ENCODE measurements at regions of chr13 and their contacts with region 1.

Region 1: GRCh38 chr13:98570929-98571372 is 6.0 kb downstream of the STK24 start:
- DNase-seq: peak; percentile 81
- H3K4me3 ChIP-seq: peak overlapping the region; percentile 3 to 38 (median 32)
- H3K27ac ChIP-seq: peak overlapping the region; percentile 60
- H3K4me1 ChIP-seq: peaks cover 47% of the 10 kb centered on the region
- H3K27me3 ChIP-seq: no peaks in the 10 kb centered on the region
- CTCF ChIP-seq: no peak

Region 2: GRCh38 chr13:98509271-98510155 is 61.4 kb before region 1 on chr13:
- CTCF ChIA-PET with region 1: no interaction called
- dilution Hi-C with region 1: no loop called
- in situ Hi-C with region 1: no loop called
- intact Hi-C with region 1: loop called (anchors 2 kb)
- DNase-seq: peak; percentile 87
- H3K4me3 ChIP-seq: peak overlapping the region in 1 of 3 experiments; percentile 4
- H3K27ac ChIP-seq: peak overlapping the region; percentile 92
- H3K4me1 ChIP-seq: peaks cover 37% of the 10 kb centered on the region
- H3K27me3 ChIP-seq: no peaks in the 10 kb centered on the region
- CTCF ChIP-seq: no peak

Measured in mammary epithelial cell (primary cell).